ENCODE measurements at regions of chr22 and their contacts with region 1.

Region 1: DNA sequence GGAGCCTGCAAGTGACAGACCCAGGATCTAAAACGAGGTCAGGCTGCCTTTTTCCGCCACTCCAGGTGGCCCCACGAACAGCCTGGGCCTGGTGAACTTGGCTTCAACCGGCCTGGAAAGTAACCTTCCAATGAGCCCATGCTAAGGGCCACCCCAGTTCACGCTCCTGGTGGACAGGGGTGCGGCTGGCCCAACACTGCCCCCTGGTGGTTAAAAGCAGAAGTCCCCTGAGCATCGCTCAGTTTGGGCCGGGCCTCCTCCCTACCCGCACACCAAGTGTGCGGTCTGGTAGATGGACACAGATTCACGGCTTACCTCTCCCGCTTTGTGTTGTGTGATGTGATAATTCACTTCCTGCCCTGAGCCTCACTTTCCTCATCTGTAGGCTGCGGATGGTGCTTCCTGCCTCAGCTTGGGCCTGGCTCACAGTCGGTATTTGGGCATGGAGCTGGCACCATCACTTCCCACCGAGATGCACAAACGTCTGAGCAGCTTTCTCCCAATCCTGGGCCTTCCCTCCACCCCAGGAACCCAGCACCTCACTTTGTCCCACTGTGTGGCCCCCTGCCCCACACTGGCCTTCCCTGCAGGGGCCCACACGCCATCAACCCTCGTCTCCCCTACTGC is 13.7 kb upstream of the SEC14L3 start:
- DNase-seq: peak; percentile 61 to 77 (median 77)
- ATAC-seq: peak; percentile 98
- H3K4me3 ChIP-seq: no peak overlapping the region
- H3K4me1 ChIP-seq: no peaks in the 10 kb centered on the region
- CTCF ChIP-seq: peak; percentile 91

Region 2: GRCh38 chr22:29937940-29938693 is 547.4 kb before region 1 on chr22:
- intact Hi-C with region 1: no loop called
- DNase-seq: no peak
- ATAC-seq: no peak
- H3K4me3 ChIP-seq: no peak overlapping the region
- H3K4me1 ChIP-seq: peaks cover 8% of the 10 kb centered on the region
- CTCF ChIP-seq: no peak

Region 3: GRCh38 chr22:30390974-30391691 is 94.3 kb before region 1 on chr22:
- intact Hi-C with region 1: loop called (anchors 2 to 5 kb)
- DNase-seq: peak; percentile 73 to 84 (median 83)
- ATAC-seq: peak; percentile 74
- H3K4me3 ChIP-seq: no peak overlapping the region
- H3K4me1 ChIP-seq: peaks cover 11% of the 10 kb centered on the region
- CTCF ChIP-seq: peak; percentile 79

Measured in mucosa of descending colon (tissue), 3 donors.